ENCODE measurements at regions of chr20 and their contacts with region 1.

Region 1: DNA sequence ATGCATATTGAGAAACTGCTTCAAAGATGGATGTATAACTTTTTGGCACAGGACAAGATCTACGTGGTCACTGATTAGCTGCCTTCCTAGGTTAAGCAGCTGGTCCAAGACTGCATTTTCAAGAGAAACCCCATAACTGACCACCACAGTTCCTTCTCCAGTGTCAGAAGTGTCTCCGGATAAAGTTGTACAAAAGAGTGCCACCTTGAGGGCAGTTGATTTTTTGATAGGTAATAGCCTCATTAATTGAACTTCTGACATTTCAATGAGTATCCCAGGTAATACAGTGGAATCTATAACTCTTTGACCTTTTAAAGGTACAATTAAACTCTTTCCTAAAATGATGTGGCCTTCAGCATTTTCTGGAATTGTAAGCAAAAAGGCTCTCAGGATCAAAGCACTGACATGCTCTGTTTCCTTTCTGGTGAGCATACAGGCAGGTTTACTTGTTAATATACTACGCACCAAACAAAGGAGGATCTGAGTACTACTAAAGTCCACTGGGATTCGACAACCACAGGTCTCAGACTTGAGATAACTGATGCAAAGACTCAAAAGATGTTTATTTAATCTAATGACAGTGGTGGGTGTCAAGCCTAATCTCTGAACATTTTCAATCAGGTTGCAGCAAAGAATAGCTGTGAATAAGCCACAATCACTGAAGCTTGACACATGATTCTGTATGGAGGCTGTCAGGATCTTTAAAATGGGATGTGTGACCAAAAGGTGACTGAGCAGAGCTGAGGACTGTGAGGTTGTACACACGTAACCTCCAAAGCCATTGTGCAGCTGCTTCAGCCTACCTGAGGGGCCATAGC is 21.2 kb downstream of the MKKS start:
- DNase-seq: no peak
- H3K4me3 ChIP-seq: no peak overlapping the region
- H3K4me3 Mint-ChIP-seq: no peak overlapping the region
- H3K27ac Mint-ChIP-seq: no peak overlapping the region
- H3K4me1 ChIP-seq: no peaks in the 10 kb centered on the region
- H3K4me1 Mint-ChIP-seq: no peaks in the 10 kb centered on the region
- H3K27me3 ChIP-seq: no peaks in the 10 kb centered on the region
- H3K27me3 Mint-ChIP-seq: no peaks in the 10 kb centered on the region
- CTCF ChIP-seq: peak in 1 of 2 experiments; percentile 20

Region 2: DNA sequence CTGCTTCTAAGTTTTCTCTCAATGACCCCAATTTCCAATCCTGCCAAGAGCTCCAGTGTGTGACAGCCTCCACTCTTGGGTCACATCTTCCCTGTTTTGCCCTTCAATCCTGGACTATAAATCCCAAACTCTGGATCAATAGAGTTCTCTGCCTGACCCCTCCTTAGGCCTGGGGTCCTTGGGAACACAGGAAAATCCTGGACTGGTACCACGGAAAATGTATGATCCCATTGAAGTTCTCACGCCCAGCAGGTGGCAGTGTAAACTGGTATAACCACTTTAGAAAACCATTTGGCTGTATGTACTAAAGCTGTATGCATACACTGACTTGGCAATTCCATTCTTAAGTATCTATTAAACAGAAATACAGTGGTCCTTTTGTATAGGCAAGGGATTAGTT is 96.2 kb before region 1 on chr20:
- CTCF ChIA-PET with region 1: no interaction called
- POLR2A ChIA-PET with region 1: no interaction called
- intact Hi-C with region 1: loop called (anchors 5 kb)
- DNase-seq: peak in 1 of 2 experiments; percentile 23
- H3K4me3 ChIP-seq: no peak overlapping the region
- H3K4me3 Mint-ChIP-seq: no peak overlapping the region
- H3K27ac Mint-ChIP-seq: no peak overlapping the region
- H3K4me1 ChIP-seq: peaks cover 18% of the 10 kb centered on the region
- H3K4me1 Mint-ChIP-seq: peaks cover 9% of the 10 kb centered on the region
- H3K27me3 ChIP-seq: no peaks in the 10 kb centered on the region
- H3K27me3 Mint-ChIP-seq: no peaks in the 10 kb centered on the region
- CTCF ChIP-seq: peak in 1 of 2 experiments; percentile 7

Region 3: GRCh38 chr20:10352934-10353866 is 59.6 kb before region 1 on chr20:
- CTCF ChIA-PET with region 1: no interaction called
- POLR2A ChIA-PET with region 1: no interaction called
- intact Hi-C with region 1: loop called (anchors 5 kb)
- DNase-seq: no peak
- H3K4me3 ChIP-seq: no peak overlapping the region
- H3K4me3 Mint-ChIP-seq: no peak overlapping the region
- H3K27ac Mint-ChIP-seq: no peak overlapping the region
- H3K4me1 ChIP-seq: peaks cover 26% of the 10 kb centered on the region; the same call in 1 of the 2 replicates
- H3K4me1 Mint-ChIP-seq: peaks cover 10% of the 10 kb centered on the region
- H3K27me3 ChIP-seq: no peaks in the 10 kb centered on the region
- H3K27me3 Mint-ChIP-seq: no peaks in the 10 kb centered on the region
- CTCF ChIP-seq: no peak